Left colon (tissue), 2 donors: ENCODE measurements at regions of chr15 and their contacts with region 1.

Region 1: GRCh38 chr15:93087825-93088199 is 1.2 kb downstream of the RGMA start:
- DNase-seq: peak; percentile 44 to 68
- ATAC-seq: peak; percentile 74

Region 2: DNA sequence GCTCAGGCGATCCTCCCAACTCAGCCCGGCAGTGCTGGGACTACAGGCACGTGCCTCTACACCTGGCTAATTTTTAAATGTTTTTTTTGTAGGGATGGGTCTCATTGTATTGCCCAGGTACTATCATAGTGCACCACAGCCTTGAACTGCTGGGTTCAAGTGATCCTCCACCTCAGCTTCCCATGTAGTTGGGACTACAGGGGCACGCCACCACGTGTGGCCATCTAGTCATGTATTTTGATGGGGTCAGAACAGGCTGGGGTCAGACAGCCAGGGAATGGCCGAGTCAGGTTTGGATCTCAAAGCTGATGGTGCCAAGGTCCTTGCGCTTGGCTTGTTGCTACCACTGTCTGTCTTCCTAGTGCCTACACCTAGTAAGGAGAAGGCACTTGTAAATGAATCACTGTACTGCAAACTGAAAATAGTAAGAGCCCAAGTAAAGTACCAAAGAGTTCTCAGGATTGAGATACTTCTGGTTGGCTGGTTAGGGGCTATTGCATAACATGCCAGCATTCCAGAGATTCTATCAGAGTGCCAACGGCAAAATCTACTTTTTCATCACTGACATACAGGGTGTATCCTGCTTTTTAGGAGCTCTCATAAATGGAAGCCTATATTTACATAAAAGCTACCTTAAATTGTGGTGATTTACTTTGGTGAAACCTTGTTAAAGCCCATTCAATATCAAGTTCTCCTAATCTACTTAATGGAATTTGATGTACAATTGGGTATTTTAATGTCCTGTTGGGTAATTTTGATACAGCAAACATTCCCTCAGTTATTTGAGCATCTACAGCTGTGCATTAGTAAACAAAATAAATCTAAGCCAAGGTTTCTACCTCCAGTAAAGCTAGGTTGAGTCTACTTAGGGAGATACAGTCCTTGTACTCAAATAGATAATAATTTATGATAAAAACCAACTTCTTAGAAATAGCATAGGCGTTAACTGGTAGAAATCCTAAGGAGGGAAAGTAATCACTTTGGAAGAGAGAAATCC is 218.5 kb before region 1 on chr15:
- intact Hi-C with region 1: no loop called
- DNase-seq: no peak
- ATAC-seq: no peak

Region 3: GRCh38 chr15:92979011-92979701 is 108.7 kb before region 1 on chr15:
- intact Hi-C with region 1: no loop called
- DNase-seq: no peak
- ATAC-seq: peak; percentile 21

Region 4: DNA sequence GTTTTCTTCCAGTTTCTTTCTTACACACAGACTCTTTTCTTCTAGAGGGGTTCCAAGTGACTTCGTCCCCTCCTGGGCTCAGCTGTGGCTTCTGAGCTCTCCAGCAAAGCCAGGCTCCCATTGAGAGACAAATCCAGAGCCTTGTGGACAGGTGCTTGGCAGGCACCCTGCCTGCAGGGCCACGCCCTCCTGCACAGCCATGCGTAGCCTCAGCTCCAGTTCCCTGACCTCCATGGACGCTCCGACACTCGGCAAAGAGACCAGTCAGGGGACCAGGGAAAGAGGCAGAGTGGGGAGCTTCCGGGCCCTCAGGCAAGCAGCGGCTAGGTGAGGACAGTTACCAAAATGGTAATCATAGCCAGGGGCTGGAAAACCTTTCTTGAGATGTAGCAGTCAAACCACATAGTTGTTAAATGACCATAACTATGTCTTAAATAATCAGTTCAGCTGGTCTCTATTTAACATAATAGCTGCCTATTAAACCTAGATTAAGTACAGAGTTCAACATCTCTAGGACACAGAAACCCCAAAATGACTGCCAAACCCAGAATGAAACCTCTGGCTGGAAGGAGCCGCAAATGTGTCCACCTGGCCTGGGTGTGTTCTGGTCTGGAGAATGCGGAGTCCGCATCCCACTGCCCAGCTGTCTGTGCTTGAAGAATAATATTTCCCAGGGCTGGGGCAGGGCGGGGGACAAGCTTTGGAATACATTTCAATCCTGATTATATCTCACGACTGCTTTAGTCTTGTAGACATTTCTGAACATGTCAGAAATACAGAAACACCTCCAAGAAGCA is 70.5 kb after region 1 on chr15:
- intact Hi-C with region 1: no loop called
- DNase-seq: no peak
- ATAC-seq: no peak

Region 5: GRCh38 chr15:93974804-93975481 is 887.1 kb after region 1 on chr15:
- intact Hi-C with region 1: loop called in 1 of 2 experiments (anchors 10 kb)
- DNase-seq: no peak
- ATAC-seq: no peak